ENCODE measurements at regions of chr1 and their contacts with region 1.

Region 1: DNA sequence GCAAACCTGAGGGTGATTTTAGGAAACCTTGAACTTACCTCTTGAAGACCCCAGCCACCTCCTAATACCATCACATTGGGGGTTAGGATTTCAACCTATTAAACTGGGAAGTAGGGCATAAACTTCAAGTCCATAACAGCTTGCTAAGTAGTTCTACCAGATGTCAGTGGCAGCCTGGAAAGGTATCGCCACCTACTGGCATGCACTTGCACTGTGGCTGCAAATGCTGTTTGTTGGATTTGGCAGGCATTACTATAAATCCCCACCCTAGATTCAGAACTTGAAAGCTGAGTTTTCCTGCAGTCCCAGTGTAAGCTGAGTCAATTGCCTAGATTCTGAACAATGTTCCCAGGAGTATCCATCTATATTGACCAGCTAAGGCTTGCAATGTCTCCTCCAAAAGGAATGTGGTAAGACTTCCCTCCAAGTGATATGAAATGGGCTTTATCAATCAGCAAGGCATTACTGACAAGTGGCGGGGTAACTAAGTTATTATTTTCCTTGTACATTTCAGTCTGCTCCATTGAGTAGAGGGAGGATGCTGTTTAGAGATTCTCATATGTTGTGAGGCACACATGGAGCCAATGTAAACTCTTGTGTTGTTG is 474.5 kb downstream of the PTPRC start:
- DNase-seq: peak; percentile 48 to 77 (median 73)
- ATAC-seq: peak; percentile 84
- H3K4me3 ChIP-seq: no peak overlapping the region
- H3K4me1 ChIP-seq: no peaks in the 10 kb centered on the region
- CTCF ChIP-seq: peak; percentile 62

Region 2: GRCh38 chr1:198756470-198756869 is 356.9 kb before region 1 on chr1:
- intact Hi-C with region 1: loop called in 1 of 2 experiments (anchors 5 kb)
- DNase-seq: no peak
- ATAC-seq: peak; percentile 47
- H3K4me3 ChIP-seq: no peak overlapping the region
- H3K4me1 ChIP-seq: no peaks in the 10 kb centered on the region
- CTCF ChIP-seq: no peak